B cell (primary cell): ENCODE measurements at regions of chr13 and their contacts with region 1.

Region 1: DNA sequence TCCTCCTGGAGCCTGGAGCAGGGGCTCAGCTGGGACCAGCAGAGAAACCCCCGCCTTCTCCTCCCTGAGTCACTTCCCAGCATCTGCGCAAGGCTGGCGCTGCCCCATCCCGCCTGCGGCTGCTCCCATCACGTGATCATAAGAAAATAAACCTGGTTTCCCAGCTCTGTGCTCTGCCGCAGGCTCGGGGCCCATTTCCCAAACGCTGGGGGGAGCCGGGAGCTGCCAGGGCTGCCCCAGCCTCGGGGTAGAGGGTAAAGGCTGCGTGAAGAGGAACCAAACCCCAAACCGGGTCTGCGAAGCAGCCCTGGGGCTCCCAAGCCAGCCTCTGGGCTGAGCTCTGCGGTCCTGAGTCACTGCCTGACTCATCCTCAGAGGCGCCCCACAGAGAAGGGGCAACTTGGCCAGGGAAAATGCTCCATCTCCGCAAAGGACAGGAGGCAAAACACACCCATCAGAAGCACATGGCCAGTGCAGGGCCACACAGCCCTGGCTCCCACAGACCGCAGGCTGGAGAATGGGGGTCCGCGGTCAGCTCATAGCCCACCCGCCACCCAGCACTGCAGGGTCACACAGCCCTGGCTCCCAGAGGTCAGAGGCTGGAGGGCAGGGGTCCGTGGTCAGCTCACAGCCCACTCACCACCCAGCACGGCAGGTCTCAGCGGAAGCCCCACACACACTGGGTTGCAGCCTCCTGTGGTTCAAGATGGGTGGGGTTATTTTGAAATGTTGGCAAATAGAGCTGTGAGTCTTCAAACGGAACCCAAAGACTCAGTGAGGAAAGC is 67.1 kb downstream of the RASA3 start:
- DNase-seq: peak; percentile 66
- ATAC-seq: peak; percentile 77
- H3K4me3 ChIP-seq: peak overlapping the region; percentile 19 to 68 (median 52)
- H3K4me3 Mint-ChIP-seq: peak overlapping the region; percentile 89
- H3K27ac ChIP-seq: peak overlapping the region; percentile 34 to 87
- H3K27ac Mint-ChIP-seq: peak overlapping the region; percentile 93
- H3K4me1 ChIP-seq: peaks cover 56 to 64% of the 10 kb centered on the region in 2 donors
- H3K4me1 Mint-ChIP-seq: peaks cover 63% of the 10 kb centered on the region
- H3K27me3 ChIP-seq: no peaks in the 10 kb centered on the region
- H3K27me3 Mint-ChIP-seq: no peaks in the 10 kb centered on the region
- CTCF ChIP-seq: no peak

Region 2: DNA sequence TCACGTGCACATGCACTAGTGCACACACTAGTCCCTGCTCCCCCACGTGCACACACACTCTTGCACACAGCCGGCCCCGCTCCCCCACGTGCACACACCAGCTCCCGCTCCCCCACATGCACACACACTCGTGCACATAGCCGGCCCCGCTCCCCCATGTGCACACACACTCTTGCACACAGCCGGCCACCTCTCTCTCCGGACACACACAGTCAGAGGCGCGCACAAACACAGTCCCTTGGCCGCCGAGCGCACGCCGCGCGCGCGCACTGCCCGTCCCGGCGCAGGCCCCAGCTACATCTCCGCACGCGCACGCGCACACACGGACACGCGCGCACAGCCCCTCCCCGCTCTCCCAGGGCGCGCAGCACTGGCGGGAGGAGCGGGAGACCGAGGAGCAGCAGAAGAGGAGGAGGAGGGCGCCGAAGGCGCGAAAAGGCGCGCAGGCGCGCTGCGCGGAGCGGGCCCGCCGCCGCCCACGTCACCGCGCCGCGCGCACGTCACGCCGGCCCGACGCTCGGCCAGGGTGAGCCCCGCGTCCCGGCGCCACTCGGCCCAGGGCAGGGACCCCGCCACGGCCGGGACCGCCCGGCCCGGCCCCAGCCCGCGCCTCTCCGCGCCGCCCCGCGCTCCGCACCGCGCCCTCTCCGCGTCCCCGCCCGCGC is 481.0 kb before region 1 on chr13 and contains the start of gene TFDP1:
- CTCF ChIA-PET with region 1: no interaction called
- POLR2A ChIA-PET with region 1: no interaction called
- intact Hi-C with region 1: no loop called
- DNase-seq: peak; percentile 73
- ATAC-seq: peak; percentile 83
- H3K4me3 ChIP-seq: peak within 1 kb of the TSS; percentile 27 to 66 (median 56)
- H3K4me3 Mint-ChIP-seq: peak within 1 kb of the TSS; percentile 90
- H3K27ac ChIP-seq: no peak within 1 kb of the TSS
- H3K27ac Mint-ChIP-seq: peak within 1 kb of the TSS; percentile 85
- H3K4me1 ChIP-seq: peaks cover 9 to 19% of the 10 kb centered on the region in 2 donors
- H3K4me1 Mint-ChIP-seq: peaks cover 26% of the 10 kb centered on the region
- H3K27me3 ChIP-seq: no peaks in the 10 kb centered on the region
- H3K27me3 Mint-ChIP-seq: no peaks in the 10 kb centered on the region
- CTCF ChIP-seq: no peak
- total RNA-seq, gene TFDP1: 31.1 and 33.8 TPM in 2 replicates

Region 3: GRCh38 chr13:114025714-114026431 is 39.5 kb before region 1 on chr13:
- CTCF ChIA-PET with region 1: no interaction called
- POLR2A ChIA-PET with region 1: interaction called, 6 read pairs
- intact Hi-C with region 1: loop called (anchors 2 kb)
- DNase-seq: no peak
- ATAC-seq: no peak
- H3K4me3 ChIP-seq: no peak overlapping the region
- H3K4me3 Mint-ChIP-seq: peak overlapping the region; percentile 63
- H3K27ac ChIP-seq: peak overlapping the region in 1 of 2 donors; percentile 3
- H3K27ac Mint-ChIP-seq: peak overlapping the region; percentile 65
- H3K4me1 ChIP-seq: peaks cover 27 to 62% of the 10 kb centered on the region in 2 donors
- H3K4me1 Mint-ChIP-seq: peaks cover 53% of the 10 kb centered on the region
- H3K27me3 ChIP-seq: no peaks in the 10 kb centered on the region
- H3K27me3 Mint-ChIP-seq: no peaks in the 10 kb centered on the region
- CTCF ChIP-seq: no peak

Region 4: DNA sequence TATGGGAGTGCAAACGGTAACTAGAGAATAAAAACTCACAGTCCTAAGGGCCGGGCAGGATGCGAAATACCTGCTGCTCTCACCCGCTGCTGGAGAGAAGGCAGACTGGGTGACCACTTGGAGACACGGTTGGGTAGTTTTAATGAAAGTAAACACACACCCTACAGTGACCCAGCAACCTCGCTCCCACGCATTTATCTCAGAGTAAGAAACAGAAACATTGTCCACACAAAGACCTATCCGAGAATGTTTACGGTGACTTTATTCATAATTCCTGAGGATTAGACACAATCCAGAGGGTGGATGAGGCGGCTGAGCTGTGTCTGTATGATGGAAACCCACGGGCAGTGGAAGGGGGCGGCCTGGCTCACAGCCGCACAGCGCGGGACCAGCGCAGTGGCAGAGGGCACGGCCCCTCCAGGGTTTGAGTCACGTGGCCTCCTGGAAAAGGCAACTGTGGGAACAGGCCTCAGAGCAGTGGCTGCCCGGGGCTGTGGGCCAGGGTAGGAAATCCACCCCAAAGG is 17.9 kb before region 1 on chr13:
- CTCF ChIA-PET with region 1: interaction called, 4 read pairs
- POLR2A ChIA-PET with region 1: interaction called, 16 read pairs
- intact Hi-C with region 1: loop called (anchors 2 kb)
- DNase-seq: no peak
- ATAC-seq: peak; percentile 31
- H3K4me3 ChIP-seq: peak overlapping the region in 2 of 5 experiments; percentile 7 to 27
- H3K4me3 Mint-ChIP-seq: peak overlapping the region; percentile 73
- H3K27ac ChIP-seq: peak overlapping the region in 1 of 2 donors; percentile 26
- H3K27ac Mint-ChIP-seq: peak overlapping the region; percentile 89
- H3K4me1 ChIP-seq: peaks cover 41 to 70% of the 10 kb centered on the region in 2 donors
- H3K4me1 Mint-ChIP-seq: peaks cover 71% of the 10 kb centered on the region
- H3K27me3 ChIP-seq: no peaks in the 10 kb centered on the region
- H3K27me3 Mint-ChIP-seq: no peaks in the 10 kb centered on the region
- CTCF ChIP-seq: no peak

Region 5: GRCh38 chr13:114226699-114227323 is 161.5 kb after region 1 on chr13:
- CTCF ChIA-PET with region 1: interaction called, 3 read pairs
- POLR2A ChIA-PET with region 1: no interaction called
- intact Hi-C with region 1: loop called (anchors 2 kb)
- DNase-seq: peak; percentile 87
- ATAC-seq: peak; percentile 93
- H3K4me3 ChIP-seq: no peak overlapping the region
- H3K4me3 Mint-ChIP-seq: no peak overlapping the region
- H3K27ac ChIP-seq: no peak overlapping the region
- H3K27ac Mint-ChIP-seq: peak overlapping the region; percentile 41
- H3K4me1 ChIP-seq: peaks cover 16 to 20% of the 10 kb centered on the region in 2 donors
- H3K4me1 Mint-ChIP-seq: peaks cover 20% of the 10 kb centered on the region
- H3K27me3 ChIP-seq: peaks cover 0 to 17% (median 12%) of the 10 kb centered on the region in 4 experiments
- H3K27me3 Mint-ChIP-seq: peaks cover 19% of the 10 kb centered on the region
- CTCF ChIP-seq: peak; percentile 89